AG04450 (cell line): ENCODE measurements at regions of chr6 and their contacts with region 1.

Region 1: DNA sequence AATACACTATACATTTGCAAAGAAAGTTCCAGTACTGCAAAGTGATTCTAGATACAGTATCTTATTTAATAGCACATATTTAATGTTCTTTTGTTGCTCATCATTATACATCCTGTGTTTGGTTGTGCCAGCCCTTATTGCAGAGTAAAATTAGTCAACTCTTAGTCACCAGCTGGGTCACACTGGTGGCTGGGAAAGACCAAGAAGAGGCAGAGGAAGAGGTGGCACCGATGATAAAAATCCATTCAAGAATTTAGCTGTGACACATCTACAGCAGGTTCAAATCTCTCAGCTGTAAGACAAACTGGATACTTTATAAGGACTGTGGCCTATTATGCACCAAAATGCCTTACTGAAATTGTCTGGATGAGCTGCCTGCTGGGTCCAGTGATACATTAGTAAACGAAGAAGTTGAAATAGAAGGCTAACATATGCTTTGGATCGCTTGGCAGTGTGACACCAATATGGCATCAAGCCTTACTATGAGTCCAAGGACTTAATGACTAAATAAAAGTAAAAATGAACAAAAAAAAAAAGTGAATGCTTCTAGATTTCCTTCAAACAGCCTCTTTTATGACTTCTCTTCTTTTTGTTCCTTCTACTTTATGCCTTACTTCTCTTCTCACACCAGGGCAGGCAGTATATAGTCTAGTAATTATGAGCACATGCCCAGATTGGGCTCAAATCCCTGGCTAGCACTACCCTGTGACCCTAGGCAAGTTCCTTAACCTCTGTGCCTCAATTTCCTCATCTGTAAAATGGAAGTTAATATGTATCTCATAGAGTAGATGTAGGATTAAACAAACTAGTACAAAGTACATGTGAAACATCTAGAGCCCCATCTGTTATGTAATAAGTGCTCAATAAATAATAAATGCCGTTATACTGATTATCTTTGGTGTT is 29.4 kb upstream of the RNF8 start:
- DNase-seq: no peak
- H3K4me3 ChIP-seq: no peak overlapping the region
- H3K27ac ChIP-seq: peak overlapping the region; percentile 21
- H3K27me3 ChIP-seq: no peaks in the 10 kb centered on the region
- CTCF ChIP-seq: no peak

Region 2: DNA sequence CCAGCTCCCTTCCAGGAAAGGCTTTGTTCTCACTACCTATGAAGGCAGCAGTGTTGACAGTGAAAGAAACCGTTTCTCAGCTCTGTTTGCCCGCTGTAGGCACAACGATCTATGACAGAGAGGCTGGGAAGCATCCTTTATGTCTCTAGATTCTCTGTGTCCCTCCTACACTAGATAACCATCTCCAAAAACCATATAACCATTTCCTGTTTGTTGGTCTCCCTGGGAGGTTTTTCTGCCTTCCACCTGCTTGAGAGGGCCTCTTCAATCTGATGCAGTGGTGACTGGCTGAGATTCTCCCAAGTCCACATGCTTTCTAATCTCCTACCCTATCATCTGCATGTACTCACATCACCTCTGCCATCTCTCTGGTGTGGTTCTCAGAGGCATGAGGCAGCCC is 34.5 kb before region 1 on chr6:
- CTCF ChIA-PET with region 1: interaction called, 10 read pairs
- POLR2A ChIA-PET with region 1: no interaction called
- DNase-seq: no peak
- H3K4me3 ChIP-seq: no peak overlapping the region
- H3K27ac ChIP-seq: no peak overlapping the region
- H3K27me3 ChIP-seq: no peaks in the 10 kb centered on the region
- CTCF ChIP-seq: no peak

Region 3: GRCh38 chr6:37309046-37309445 is 15.3 kb before region 1 on chr6:
- CTCF ChIA-PET with region 1: interaction called, 34 read pairs
- POLR2A ChIA-PET with region 1: no interaction called
- DNase-seq: no peak
- H3K4me3 ChIP-seq: no peak overlapping the region
- H3K27ac ChIP-seq: no peak overlapping the region
- H3K27me3 ChIP-seq: no peaks in the 10 kb centered on the region
- CTCF ChIP-seq: no peak

Region 4: DNA sequence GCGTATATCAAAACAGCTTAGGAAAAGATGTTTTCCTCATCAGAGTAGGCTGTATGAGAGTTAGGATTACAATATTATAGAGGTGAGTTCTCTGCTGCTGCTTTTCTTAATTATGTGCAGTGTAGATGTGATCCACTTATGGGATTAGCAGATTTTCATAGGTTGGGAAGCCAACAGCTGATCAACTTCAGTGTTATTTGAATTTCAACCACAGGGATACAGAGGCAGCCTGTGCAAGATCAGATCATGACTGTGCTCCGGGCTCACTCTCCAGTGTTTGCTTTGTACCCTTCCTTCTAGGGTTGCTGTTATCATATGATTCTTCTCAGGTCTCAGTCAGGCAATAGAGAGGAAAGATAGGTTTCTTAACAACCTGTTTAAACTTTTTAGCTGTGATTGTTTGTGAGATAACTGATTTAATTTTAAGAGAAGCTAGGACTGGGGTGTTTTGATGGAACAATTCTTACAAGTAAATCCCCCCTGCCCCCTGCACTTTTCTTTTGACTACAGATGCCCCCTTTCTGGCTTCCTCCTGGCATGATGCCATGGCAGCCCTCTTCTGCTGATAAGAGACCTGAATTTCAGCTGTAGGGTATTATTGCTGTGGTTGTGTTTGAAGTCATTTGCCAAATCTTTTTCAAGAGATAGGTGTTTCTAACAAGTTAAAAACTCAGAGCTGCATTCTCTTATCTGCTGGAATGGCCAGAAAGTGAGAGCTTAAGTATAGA is 37.9 kb after region 1 on chr6:
- CTCF ChIA-PET with region 1: interaction called, 11 read pairs
- POLR2A ChIA-PET with region 1: no interaction called
- DNase-seq: no peak
- H3K4me3 ChIP-seq: no peak overlapping the region
- H3K27ac ChIP-seq: no peak overlapping the region
- H3K27me3 ChIP-seq: no peaks in the 10 kb centered on the region
- CTCF ChIP-seq: no peak

Region 5: DNA sequence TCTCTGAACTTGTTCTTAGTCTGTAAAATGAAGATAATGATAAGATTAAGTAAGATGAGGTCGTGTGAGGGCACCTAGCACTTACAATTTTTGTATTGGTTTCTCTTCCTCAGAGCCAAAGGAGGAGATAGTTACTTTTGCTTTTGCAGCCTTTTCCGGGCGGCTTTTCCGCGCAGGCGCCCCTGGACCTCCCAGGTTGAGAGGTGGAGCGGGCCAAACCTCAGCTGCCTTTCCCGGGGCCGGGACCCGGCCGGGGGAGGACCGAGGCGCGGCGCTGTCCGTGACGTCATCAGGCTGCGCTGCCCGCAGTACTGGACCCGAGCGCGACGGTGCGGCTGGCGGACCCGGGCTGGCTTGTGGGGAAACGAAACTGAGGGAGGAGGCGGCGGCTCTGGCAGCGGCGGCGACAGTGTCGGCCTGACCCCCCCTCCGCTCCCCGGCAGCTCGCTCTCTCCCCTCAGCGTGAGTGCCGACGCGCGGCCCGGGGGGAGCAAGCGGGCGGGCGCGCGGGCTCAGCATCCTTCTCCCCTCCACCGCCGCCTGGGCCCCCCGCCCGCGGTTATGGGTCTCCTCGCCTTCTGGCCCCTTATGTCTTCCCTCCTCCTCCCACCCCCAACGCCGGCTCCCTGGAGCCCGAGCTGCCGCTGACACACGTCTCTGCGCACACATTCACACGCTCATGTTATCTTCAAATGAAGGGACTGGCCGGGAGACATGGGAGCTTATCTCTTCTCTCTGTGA is 108.7 kb after region 1 on chr6 and contains the start of gene CMTR1:
- CTCF ChIA-PET with region 1: interaction called, 10 read pairs
- POLR2A ChIA-PET with region 1: no interaction called
- DNase-seq: peak; percentile 54
- H3K4me3 ChIP-seq: peak within 1 kb of the TSS; percentile 90
- H3K27ac ChIP-seq: peak within 1 kb of the TSS; percentile 57
- H3K27me3 ChIP-seq: no peaks in the 10 kb centered on the region
- CTCF ChIP-seq: no peak
- polyA plus RNA-seq, gene CMTR1: 25.1 and 26.8 TPM in 2 replicates

Region 6: DNA sequence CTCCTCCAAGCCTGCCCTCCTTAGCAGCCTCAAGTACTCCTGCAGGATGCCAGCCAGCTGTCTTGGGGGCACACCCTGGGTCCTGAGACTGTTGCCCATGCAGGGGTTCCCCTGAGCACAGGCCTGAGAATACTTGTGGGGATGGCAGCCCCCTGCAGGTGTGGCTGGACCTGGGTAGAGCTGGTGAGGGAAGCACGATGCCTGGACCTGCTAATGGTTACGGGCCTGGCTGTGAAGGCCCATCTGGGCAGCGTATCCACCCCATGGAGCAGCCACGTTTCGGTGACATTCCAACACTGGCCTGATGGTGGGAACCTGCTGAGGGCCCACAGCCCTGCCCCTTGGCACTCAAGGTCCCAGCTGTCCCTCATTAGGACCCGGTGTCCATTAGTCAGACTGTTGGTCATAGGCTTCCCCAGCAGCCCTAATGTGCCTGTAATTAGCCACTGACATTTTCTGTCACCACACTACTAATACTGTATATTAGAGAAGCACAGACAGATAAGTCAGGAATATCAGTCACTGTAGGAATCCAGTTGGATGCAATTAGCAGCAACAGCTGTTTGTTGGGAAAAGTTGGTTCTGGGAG is 155.0 kb after region 1 on chr6:
- CTCF ChIA-PET with region 1: no interaction called
- POLR2A ChIA-PET with region 1: no interaction called
- DNase-seq: no peak
- H3K4me3 ChIP-seq: no peak overlapping the region
- H3K27ac ChIP-seq: no peak overlapping the region
- H3K27me3 ChIP-seq: no peaks in the 10 kb centered on the region
- CTCF ChIP-seq: no peak

Region 7: GRCh38 chr6:37691904-37692806 is 367.8 kb after region 1 on chr6:
- CTCF ChIA-PET with region 1: interaction called, 26 read pairs
- POLR2A ChIA-PET with region 1: no interaction called
- DNase-seq: no peak
- H3K4me3 ChIP-seq: no peak overlapping the region
- H3K27ac ChIP-seq: peak overlapping the region; percentile 65
- H3K27me3 ChIP-seq: peaks cover 3% of the 10 kb centered on the region
- CTCF ChIP-seq: peak; percentile 96